ENCODE measurements at regions of chr11 and their contacts with region 1.

Region 1: DNA sequence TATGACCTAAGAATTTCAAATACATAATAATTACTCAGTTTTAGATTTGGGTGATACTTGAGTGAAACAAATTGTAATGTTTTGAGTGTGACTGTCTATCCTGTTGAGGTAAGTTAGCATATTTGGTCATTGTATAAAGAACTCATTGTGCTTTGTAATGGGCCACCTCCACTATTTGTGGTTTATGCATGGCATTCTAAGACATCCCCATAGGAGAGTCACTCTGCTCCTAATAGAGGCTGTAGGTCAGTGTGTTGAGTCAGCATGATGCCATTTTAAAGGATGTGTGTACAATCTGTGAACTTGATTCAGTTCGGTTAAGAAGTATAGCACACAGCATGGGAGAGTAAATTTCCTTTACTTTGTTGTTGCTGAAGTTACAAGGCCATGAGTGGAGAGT is 1112.4 kb downstream of the JRKL start:
- DNase-seq: no peak
- H3K4me3 ChIP-seq: no peak overlapping the region
- H3K27ac ChIP-seq: no peak overlapping the region
- H3K4me1 ChIP-seq: no peaks in the 10 kb centered on the region
- H3K27me3 ChIP-seq: no peaks in the 10 kb centered on the region
- CTCF ChIP-seq: no peak
- POLR2A ChIP-seq: no peak

Region 2: GRCh38 chr11:97516688-97517087 is 14.5 kb after region 1 on chr11:
- intact Hi-C with region 1: loop called (anchors 2 kb)
- DNase-seq: no peak
- H3K4me3 ChIP-seq: no peak overlapping the region
- H3K27ac ChIP-seq: no peak overlapping the region
- H3K4me1 ChIP-seq: no peaks in the 10 kb centered on the region
- H3K27me3 ChIP-seq: no peaks in the 10 kb centered on the region
- CTCF ChIP-seq: no peak
- POLR2A ChIP-seq: no peak

Measured in breast epithelium (tissue), 4 donors.